CD4-positive, alpha-beta memory T cell (primary cell): ENCODE measurements at regions of chr19 and their contacts with region 1.

Region 1: GRCh38 chr19:39792999-39793546 is 14.4 kb downstream of the LEUTX start:
- DNase-seq: peak; percentile 67 to 78 (median 69)
- H3K4me3 ChIP-seq: peak overlapping the region; percentile 63 to 73
- H3K4me3 Mint-ChIP-seq: peak overlapping the region; percentile 71 to 85 (median 80)
- H3K27ac ChIP-seq: no peak overlapping the region
- H3K27ac Mint-ChIP-seq: peak overlapping the region in 2 of 7 donors; percentile 19 to 69
- H3K4me1 ChIP-seq: peaks cover 3% of the 10 kb centered on the region
- H3K4me1 Mint-ChIP-seq: peaks cover 0 to 5% (median 2%) of the 10 kb centered on the region in 4 donors
- H3K27me3 ChIP-seq: no peaks in the 10 kb centered on the region
- H3K27me3 Mint-ChIP-seq: peaks cover 0 to 9% of the 10 kb centered on the region in 2 donors

Region 2: DNA sequence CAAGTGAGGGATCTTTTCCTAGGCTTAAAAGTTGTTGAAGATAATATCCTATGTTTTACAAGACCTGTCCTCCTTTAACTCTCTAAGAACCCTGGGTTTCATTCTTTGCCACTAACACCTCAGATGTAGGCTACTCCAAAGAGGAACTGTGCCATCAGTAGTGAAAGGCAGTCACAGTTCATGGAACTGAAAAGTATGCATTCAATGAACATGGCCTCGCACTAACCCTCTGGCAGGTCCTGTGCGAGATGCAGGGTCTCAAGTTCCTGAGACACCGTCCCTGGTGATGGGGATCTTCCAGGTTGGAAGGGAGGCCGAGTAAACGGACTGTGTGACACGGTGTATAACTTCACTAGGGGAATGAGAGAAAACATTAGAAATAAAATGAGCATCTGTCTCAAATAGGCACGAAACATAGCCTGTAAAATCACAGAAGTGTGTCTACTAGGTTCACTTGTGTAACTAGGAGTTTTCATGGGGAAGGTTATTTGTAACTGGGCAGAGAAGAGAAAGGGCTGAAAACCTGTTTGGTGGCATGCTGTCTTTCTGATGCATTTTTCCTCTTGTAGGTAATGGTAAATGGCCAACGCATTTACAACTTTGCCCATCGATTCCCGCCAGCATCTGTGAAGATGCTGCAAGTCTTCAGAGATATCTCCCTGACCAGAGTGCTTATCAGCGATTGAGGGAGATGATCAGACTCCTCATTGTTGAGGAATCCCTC is 84.3 kb before region 1 on chr19:
- CTCF ChIA-PET with region 1: no interaction called
- POLR2A ChIA-PET with region 1: no interaction called
- intact Hi-C with region 1: no loop called
- DNase-seq: no peak
- H3K4me3 ChIP-seq: no peak overlapping the region
- H3K4me3 Mint-ChIP-seq: no peak overlapping the region
- H3K27ac ChIP-seq: no peak overlapping the region
- H3K27ac Mint-ChIP-seq: no peak overlapping the region
- H3K4me1 ChIP-seq: peaks cover 32% of the 10 kb centered on the region
- H3K4me1 Mint-ChIP-seq: peaks cover 26 to 51% (median 42%) of the 10 kb centered on the region in 4 donors
- H3K27me3 ChIP-seq: no peaks in the 10 kb centered on the region
- H3K27me3 Mint-ChIP-seq: peaks cover 0 to 4% of the 10 kb centered on the region in 2 donors

Region 3: GRCh38 chr19:39738814-39739213 is 54.3 kb before region 1 on chr19:
- CTCF ChIA-PET with region 1: no interaction called
- POLR2A ChIA-PET with region 1: no interaction called
- intact Hi-C with region 1: no loop called
- DNase-seq: no peak
- H3K4me3 ChIP-seq: no peak overlapping the region
- H3K4me3 Mint-ChIP-seq: no peak overlapping the region
- H3K27ac ChIP-seq: no peak overlapping the region
- H3K27ac Mint-ChIP-seq: no peak overlapping the region
- H3K4me1 ChIP-seq: no peaks in the 10 kb centered on the region
- H3K4me1 Mint-ChIP-seq: peaks cover 11 to 22% (median 18%) of the 10 kb centered on the region in 4 donors
- H3K27me3 ChIP-seq: no peaks in the 10 kb centered on the region
- H3K27me3 Mint-ChIP-seq: peaks cover 0 to 2% of the 10 kb centered on the region in 2 donors

Region 4: GRCh38 chr19:39824143-39825092 is 31.3 kb after region 1 on chr19:
- CTCF ChIA-PET with region 1: interaction called, 4 read pairs
- POLR2A ChIA-PET with region 1: no interaction called
- intact Hi-C with region 1: loop called (anchors 2 kb)
- DNase-seq: peak; percentile 86 to 95 (median 88)
- H3K4me3 ChIP-seq: peak overlapping the region; percentile 67 to 85
- H3K4me3 Mint-ChIP-seq: no peak overlapping the region
- H3K27ac ChIP-seq: peak overlapping the region; percentile 60
- H3K27ac Mint-ChIP-seq: no peak overlapping the region
- H3K4me1 ChIP-seq: peaks cover 24% of the 10 kb centered on the region
- H3K4me1 Mint-ChIP-seq: peaks cover 7 to 16% (median 8%) of the 10 kb centered on the region in 4 donors
- H3K27me3 ChIP-seq: no peaks in the 10 kb centered on the region
- H3K27me3 Mint-ChIP-seq: no peaks in the 10 kb centered on the region

Region 5: GRCh38 chr19:39833464-39834286 is 40.6 kb after region 1 on chr19 and contains the start of gene DYRK1B:
- CTCF ChIA-PET with region 1: interaction called, 20 read pairs
- POLR2A ChIA-PET with region 1: no interaction called
- intact Hi-C with region 1: no loop called
- DNase-seq: peak; percentile 96 to 98 (median 98)
- H3K4me3 ChIP-seq: peak within 1 kb of the TSS; percentile 81 to 98
- H3K4me3 Mint-ChIP-seq: peak within 1 kb of the TSS; percentile 79 to 90 (median 86)
- H3K27ac ChIP-seq: peak within 1 kb of the TSS; percentile 91
- H3K27ac Mint-ChIP-seq: peak within 1 kb of the TSS; percentile 77 to 99 (median 96)
- H3K4me1 ChIP-seq: peaks cover 30% of the 10 kb centered on the region
- H3K4me1 Mint-ChIP-seq: peaks cover 24 to 39% (median 31%) of the 10 kb centered on the region in 4 donors
- H3K27me3 ChIP-seq: no peaks in the 10 kb centered on the region
- H3K27me3 Mint-ChIP-seq: no peaks in the 10 kb centered on the region
- total RNA-seq, gene DYRK1B: 28.4 to 30.9 TPM